PC-3 (cell line): ENCODE measurements at regions of chr1 and their contacts with region 1.

Region 1: GRCh38 chr1:220123889-220124288 is 30.0 kb downstream of the IARS2 start:
- DNase-seq: peak; percentile 27
- ATAC-seq: 0 out of 2 replicates have a peak, but pooled peaks have one; percentile 35
- H3K4me3 ChIP-seq: no peak overlapping the region
- H3K27ac ChIP-seq: no peak overlapping the region
- H3K4me1 ChIP-seq: no peaks in the 10 kb centered on the region
- H3K27me3 ChIP-seq: no peaks in the 10 kb centered on the region
- CTCF ChIP-seq: peak; percentile 59

Region 2: GRCh38 chr1:220028346-220028895 is 95.5 kb before region 1 on chr1:
- CTCF ChIA-PET with region 1: no interaction called
- POLR2A ChIA-PET with region 1: no interaction called
- intact Hi-C with region 1: loop called (anchors 5 kb)
- DNase-seq: no peak
- ATAC-seq: no peak
- H3K4me3 ChIP-seq: no peak overlapping the region
- H3K27ac ChIP-seq: no peak overlapping the region
- H3K4me1 ChIP-seq: no peaks in the 10 kb centered on the region
- H3K27me3 ChIP-seq: no peaks in the 10 kb centered on the region
- CTCF ChIP-seq: no peak